Caco-2 (cell line): ENCODE measurements at regions of chr16 and their contacts with region 1.

Region 1: DNA sequence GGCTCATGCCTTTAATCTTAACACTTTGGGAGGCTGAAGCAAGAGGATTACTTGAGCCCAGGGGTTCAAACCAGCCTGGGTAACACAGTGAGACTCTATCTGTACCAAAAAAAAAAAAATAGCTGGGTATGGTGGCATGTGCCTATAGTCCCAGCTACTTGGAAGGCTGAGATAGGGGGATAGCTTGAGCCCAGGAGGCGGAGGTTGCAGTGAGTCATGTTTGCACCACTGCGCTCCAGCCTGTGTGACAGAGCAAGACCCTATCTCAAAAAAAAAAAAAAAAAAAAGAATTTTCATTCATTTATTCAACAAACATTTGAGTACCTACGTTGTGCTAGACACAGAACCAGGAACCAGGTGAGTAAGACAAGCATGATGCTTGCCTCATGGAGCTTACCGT is 73.6 kb upstream of the MRTFB start:
- DNase-seq: no peak
- H3K4me3 ChIP-seq: no peak overlapping the region
- H3K4me3 Mint-ChIP-seq: no peak overlapping the region
- H3K27ac Mint-ChIP-seq: peak overlapping the region; percentile 0
- H3K4me1 ChIP-seq: peaks cover 7% of the 10 kb centered on the region; the same call in 1 of the 2 replicates
- H3K4me1 Mint-ChIP-seq: peaks cover 8% of the 10 kb centered on the region
- H3K27me3 ChIP-seq: no peaks in the 10 kb centered on the region
- H3K27me3 Mint-ChIP-seq: no peaks in the 10 kb centered on the region
- CTCF ChIP-seq: no peak

Region 2: GRCh38 chr16:13951611-13952010 is 45.9 kb before region 1 on chr16:
- CTCF ChIA-PET with region 1: no interaction called
- POLR2A ChIA-PET with region 1: no interaction called
- intact Hi-C with region 1: no loop called
- DNase-seq: no peak
- H3K4me3 ChIP-seq: no peak overlapping the region
- H3K4me3 Mint-ChIP-seq: no peak overlapping the region
- H3K27ac Mint-ChIP-seq: no peak overlapping the region
- H3K4me1 ChIP-seq: peaks cover under 1% of the 10 kb centered on the region; the same call in 1 of the 2 replicates
- H3K4me1 Mint-ChIP-seq: peaks cover 13% of the 10 kb centered on the region
- H3K27me3 ChIP-seq: no peaks in the 10 kb centered on the region
- H3K27me3 Mint-ChIP-seq: no peaks in the 10 kb centered on the region
- CTCF ChIP-seq: no peak

Region 3: DNA sequence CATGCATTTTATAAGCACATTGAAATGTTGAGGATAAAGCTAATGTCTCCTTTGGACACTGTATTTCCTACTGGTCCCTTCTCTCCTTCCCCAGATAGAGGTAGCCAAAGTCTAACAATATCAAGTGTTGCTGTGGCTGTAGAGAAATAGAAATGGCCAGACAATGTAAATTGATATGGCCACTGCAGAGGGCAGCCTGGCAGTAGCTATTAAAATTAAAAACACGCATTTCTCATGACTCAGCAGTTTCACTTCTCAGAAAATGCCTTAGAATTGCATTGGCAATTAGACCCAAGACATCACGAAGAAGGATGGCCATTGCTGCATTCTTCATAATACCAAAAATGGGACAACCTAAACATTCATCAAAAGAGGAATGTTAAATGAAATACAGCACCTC is 26.8 kb after region 1 on chr16:
- CTCF ChIA-PET with region 1: no interaction called
- POLR2A ChIA-PET with region 1: no interaction called
- intact Hi-C with region 1: no loop called
- DNase-seq: no peak
- H3K4me3 ChIP-seq: no peak overlapping the region
- H3K4me3 Mint-ChIP-seq: no peak overlapping the region
- H3K27ac Mint-ChIP-seq: no peak overlapping the region
- H3K4me1 ChIP-seq: no peaks in the 10 kb centered on the region
- H3K4me1 Mint-ChIP-seq: no peaks in the 10 kb centered on the region
- H3K27me3 ChIP-seq: no peaks in the 10 kb centered on the region
- H3K27me3 Mint-ChIP-seq: no peaks in the 10 kb centered on the region
- CTCF ChIP-seq: no peak

Region 4: GRCh38 chr16:14050297-14051036 is 52.9 kb after region 1 on chr16:
- CTCF ChIA-PET with region 1: no interaction called
- POLR2A ChIA-PET with region 1: interaction called, 12 read pairs
- intact Hi-C with region 1: no loop called
- DNase-seq: peak; percentile 68 to 81
- H3K4me3 ChIP-seq: peak overlapping the region; percentile 1
- H3K4me3 Mint-ChIP-seq: no peak overlapping the region
- H3K27ac Mint-ChIP-seq: no peak overlapping the region
- H3K4me1 ChIP-seq: peaks cover 16% of the 10 kb centered on the region
- H3K4me1 Mint-ChIP-seq: no peaks in the 10 kb centered on the region
- H3K27me3 ChIP-seq: no peaks in the 10 kb centered on the region
- H3K27me3 Mint-ChIP-seq: no peaks in the 10 kb centered on the region
- CTCF ChIP-seq: no peak